Activated T-helper 1 cell treated with anti-CD3 and anti-CD28 coated beads, Interleukin-12 subunit alpha, Interleukin-12 subunit beta, Interleukin-2, Interleukin-4 antibody, amounts not matched to agents 30 ng/mL and 10 ng/mL and 1 ng/mL, durations not matched to agents 14 hours and 24 hours and 36 hours (primary cell): ENCODE measurements at regions of chr1 and their contacts with region 1.

Region 1: GRCh38 chr1:193406901-193407300 is 220.5 kb upstream of the B3GALT2 start:
- DNase-seq: no peak
- H3K4me3 Mint-ChIP-seq: no peak overlapping the region
- H3K27ac Mint-ChIP-seq: no peak overlapping the region
- H3K4me1 Mint-ChIP-seq: peaks cover 28% of the 10 kb centered on the region
- H3K27me3 Mint-ChIP-seq: no peaks in the 10 kb centered on the region

Region 2: DNA sequence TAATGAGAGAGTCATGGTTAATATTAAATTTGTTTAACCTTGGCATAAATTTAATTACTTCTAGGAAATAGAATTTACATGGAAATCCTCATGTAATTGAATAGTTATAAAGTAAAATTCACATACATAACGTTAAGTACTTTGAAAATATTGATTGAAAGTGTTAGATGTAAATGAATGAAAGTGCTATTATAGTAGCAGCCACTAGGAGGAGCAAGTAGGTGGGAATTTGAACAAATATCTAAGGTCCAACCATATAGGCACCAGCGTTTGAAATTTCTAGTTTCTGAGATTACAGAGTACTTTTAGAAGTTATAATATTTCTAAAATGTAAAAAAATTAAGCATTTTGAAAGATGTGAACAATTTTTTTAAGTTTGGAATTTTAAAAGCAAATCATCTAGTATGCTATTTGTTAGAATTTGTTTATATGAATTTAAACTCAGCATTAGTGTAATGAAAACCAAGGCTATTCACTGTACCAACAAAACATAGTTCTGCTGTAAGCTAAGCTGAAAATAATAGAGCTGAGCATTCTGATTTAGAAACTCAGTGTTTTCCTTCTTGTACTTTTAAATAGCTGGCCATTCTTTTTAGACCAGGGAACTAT is 223.8 kb before region 1 on chr1:
- intact Hi-C with region 1: loop called (anchors 5 kb)
- DNase-seq: no peak
- H3K4me3 Mint-ChIP-seq: no peak overlapping the region
- H3K27ac Mint-ChIP-seq: no peak overlapping the region
- H3K4me1 Mint-ChIP-seq: peaks cover 35% of the 10 kb centered on the region
- H3K27me3 Mint-ChIP-seq: no peaks in the 10 kb centered on the region

Region 3: DNA sequence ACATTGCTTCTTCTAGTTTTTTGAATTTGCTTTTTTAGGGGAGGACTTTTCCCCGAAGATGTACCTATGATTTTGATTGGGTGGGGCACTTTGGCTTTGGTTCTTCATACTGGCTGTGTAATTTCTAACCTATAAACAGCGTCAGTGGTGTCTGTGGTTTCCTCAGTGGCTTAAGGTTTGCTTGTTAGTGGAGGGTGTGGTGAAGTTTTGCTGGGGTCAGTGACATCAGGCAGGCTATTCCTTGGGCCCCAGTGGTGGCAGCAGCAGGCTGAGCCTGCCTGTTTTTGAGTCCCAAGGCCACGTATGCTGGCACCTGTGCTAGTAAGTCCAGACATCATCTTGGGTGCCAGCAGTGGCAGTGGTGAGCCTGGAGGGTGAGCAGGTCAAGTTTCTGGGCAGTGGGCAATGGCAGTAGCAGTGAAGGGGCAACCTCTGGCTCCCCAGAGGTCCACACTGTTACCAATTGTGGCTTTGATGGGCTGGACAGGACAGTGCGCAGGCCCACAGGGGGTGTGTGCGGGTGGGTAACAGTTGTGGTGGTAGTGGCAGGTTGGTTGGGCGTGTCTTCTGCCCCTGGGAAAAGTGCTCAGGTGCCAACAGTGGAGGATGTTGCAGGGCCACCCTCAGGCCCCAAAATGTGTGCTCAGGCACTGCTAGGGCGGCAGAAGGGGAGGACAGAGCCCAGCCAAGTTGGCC is 165.6 kb before region 1 on chr1:
- intact Hi-C with region 1: no loop called
- DNase-seq: peak; percentile 13
- H3K4me3 Mint-ChIP-seq: peak overlapping the region; percentile 37
- H3K27ac Mint-ChIP-seq: peak overlapping the region; percentile 36
- H3K4me1 Mint-ChIP-seq: peaks cover 33% of the 10 kb centered on the region
- H3K27me3 Mint-ChIP-seq: no peaks in the 10 kb centered on the region

Region 4: DNA sequence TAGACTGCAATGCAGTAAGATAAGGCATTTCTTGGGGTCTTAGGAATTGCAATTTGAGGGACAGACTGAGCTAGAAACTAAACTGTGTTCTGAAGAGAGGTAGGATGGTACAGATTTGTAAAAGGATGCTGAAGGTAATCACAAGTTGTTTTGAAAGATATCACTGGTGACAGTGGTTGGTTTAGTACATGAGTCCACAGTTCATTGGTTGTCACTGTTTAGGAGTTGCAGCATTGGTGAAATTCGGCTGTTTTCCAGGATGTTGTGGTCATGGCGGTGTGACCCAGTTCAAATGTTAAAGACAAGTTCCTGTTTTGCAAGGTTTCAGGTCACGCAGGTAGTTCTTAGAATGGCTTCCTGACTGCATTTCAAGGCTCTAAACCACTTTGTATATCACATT is 72.3 kb after region 1 on chr1:
- intact Hi-C with region 1: loop called (anchors 2 kb)
- DNase-seq: peak; percentile 84
- H3K4me3 Mint-ChIP-seq: peak overlapping the region; percentile 30
- H3K27ac Mint-ChIP-seq: peak overlapping the region; percentile 86
- H3K4me1 Mint-ChIP-seq: peaks cover 78% of the 10 kb centered on the region
- H3K27me3 Mint-ChIP-seq: no peaks in the 10 kb centered on the region

Region 5: DNA sequence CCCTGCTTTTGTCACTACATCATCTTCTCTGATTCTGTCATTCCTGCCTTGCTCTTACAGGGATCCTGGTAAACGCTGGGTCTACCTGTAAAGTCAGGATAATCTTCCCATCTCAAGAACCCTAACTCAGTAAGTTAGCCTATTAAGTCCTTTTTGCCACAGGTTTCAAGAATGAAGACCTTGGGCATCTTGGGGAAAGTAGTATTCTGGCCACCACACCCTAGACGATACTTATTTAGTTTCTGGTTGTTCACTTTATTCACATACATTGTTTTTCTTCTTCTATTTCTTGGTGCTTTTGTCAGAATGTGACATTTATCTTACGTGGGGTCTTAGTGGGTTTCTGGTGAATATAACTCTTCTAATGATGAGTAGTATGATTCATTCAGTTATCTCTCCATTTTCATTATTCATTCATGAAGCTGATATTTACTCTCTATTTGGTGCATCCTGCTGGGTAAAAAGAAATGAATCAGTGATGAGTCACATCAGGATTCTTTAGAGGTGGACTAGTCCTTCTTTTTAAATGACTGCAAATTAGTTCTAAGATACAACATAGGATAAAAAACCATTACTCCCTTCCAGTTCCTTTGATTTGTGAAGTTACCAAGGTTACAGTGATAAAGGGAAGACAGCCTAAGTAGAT is 293.9 kb after region 1 on chr1:
- intact Hi-C with region 1: loop called (anchors 2 kb)
- DNase-seq: no peak
- H3K4me3 Mint-ChIP-seq: no peak overlapping the region
- H3K27ac Mint-ChIP-seq: peak overlapping the region; percentile 20
- H3K4me1 Mint-ChIP-seq: peaks cover 15% of the 10 kb centered on the region
- H3K27me3 Mint-ChIP-seq: no peaks in the 10 kb centered on the region

Region 6: GRCh38 chr1:194289569-194290266 is 882.8 kb after region 1 on chr1:
- intact Hi-C with region 1: loop called (anchors 2 kb)
- DNase-seq: peak; percentile 20
- H3K4me3 Mint-ChIP-seq: no peak overlapping the region
- H3K27ac Mint-ChIP-seq: no peak overlapping the region
- H3K4me1 Mint-ChIP-seq: peaks cover 18% of the 10 kb centered on the region
- H3K27me3 Mint-ChIP-seq: no peaks in the 10 kb centered on the region